Activated CD4-positive, alpha-beta T cell treated with anti-CD3 and anti-CD28 coated beads, Interleukin-2, amount 10 ng/mL, durations not matched to agents 24 days and 14 days (primary cell): ENCODE measurements at regions of chr12 and their contacts with region 1.

Region 1: GRCh38 chr12:21683115-21683514 is 25.5 kb upstream of the LDHB start:
- DNase-seq: no peak
- H3K4me3 Mint-ChIP-seq: no peak overlapping the region
- H3K27ac Mint-ChIP-seq: no peak overlapping the region
- H3K4me1 Mint-ChIP-seq: peaks cover 12% of the 10 kb centered on the region
- H3K27me3 Mint-ChIP-seq: peaks cover 8% of the 10 kb centered on the region

Region 2: DNA sequence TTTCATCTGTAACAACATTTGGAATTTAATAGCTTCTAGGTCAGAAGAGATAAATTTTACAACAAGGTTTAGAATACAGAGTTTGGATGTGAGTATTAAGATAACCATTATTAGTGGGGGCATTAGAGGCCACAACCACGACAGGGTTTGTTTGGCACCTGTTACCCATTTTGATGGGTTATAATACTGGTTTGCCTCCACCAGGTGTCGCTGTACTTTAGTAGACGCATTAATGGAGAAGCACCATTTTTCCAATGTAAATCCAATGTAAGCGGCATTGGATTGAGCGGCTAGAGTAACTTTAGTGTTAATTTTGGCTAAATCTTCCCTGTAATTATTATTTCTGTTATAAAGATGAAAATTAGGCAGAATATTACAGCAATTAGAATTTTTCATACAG is 736.4 kb before region 1 on chr12:
- intact Hi-C with region 1: loop called (anchors 10 kb)
- DNase-seq: peak; percentile 65
- H3K4me3 Mint-ChIP-seq: no peak overlapping the region
- H3K27ac Mint-ChIP-seq: no peak overlapping the region
- H3K4me1 Mint-ChIP-seq: no peaks in the 10 kb centered on the region
- H3K27me3 Mint-ChIP-seq: no peaks in the 10 kb centered on the region